ENCODE measurements at regions of chr13 and their contacts with region 1.

Region 1: DNA sequence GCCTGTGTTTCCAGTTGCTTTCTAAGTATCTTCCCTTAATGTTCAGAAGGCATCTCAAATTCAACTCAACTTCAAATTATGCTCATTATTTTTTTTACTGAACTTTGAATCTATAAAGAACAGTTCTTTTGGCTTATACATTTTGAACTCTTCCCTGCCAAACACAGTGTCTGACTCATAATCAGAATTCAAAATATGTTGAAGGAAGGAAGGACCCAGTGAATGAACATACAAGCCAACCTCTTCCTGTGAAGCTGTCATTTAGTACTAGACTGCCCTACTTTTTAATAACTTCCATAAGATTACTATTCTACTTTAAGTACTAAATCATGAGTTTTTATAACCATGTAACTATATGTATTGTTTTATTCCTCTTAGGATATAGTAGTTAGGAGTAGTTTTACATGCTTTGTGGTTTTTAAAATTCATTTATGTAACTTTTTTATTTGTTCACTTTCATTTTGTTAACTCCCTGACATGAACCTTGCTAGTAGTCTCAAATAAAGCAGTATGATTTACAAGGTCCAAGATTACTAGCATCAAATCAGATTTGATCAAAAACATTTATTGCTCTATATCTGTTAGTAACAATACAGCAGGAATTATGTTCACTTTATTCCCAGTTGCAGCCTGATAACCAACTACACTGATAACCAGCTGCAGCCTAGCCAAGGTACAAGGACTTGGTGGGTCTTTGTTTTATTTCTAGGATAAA is 6.4 kb downstream of the NUDT15 start:
- DNase-seq: no peak
- ATAC-seq: no peak
- H3K4me3 ChIP-seq: no peak overlapping the region
- H3K27ac ChIP-seq: no peak overlapping the region
- H3K4me1 ChIP-seq: peaks cover 17% of the 10 kb centered on the region
- H3K27me3 ChIP-seq: no peaks in the 10 kb centered on the region
- CTCF ChIP-seq: no peak
- EP300 ChIP-seq: no peak
- POLR2A ChIP-seq: no peak
- RAD21 ChIP-seq: no peak

Region 2: DNA sequence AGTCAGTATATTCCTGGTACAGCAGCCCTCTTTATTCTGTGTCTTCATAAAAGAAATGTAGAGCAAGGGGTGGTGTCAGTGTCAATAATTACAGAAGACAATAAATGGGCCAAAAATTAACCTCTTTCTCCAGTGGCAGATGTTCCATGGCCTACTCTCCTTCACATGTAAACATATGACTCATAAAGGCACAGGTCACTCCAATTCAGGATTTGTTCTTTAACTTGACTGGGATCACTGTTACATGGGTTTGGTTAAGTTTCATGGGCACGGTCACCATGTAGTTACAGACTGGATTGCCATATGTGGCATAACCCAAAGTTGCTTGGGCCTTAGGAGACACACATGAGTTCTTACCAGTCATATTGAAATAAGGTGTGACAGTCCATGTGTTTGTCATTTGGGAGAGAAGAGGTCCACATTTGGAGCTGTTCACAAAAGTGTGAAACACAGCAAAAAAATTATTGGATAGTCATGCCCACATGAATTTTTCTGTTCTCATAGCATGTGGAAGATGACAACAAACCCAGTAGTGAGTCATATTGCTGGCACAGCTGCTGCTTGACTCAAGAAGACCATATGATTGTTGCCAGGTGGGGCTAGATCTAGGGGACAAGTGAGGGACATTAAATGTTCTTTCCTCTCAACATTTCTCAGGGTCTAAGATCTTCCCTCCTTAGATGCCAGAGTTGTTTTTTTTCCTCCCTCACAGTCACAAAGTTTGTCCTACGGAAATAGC is 1079.0 kb before region 1 on chr13:
- CTCF ChIA-PET with region 1: no interaction called
- POLR2A ChIA-PET with region 1: no interaction called
- in situ Hi-C with region 1: no loop called
- intact Hi-C with region 1: loop called (anchors 5 kb)
- DNase-seq: no peak
- ATAC-seq: no peak
- H3K4me3 ChIP-seq: no peak overlapping the region
- H3K27ac ChIP-seq: no peak overlapping the region
- H3K4me1 ChIP-seq: no peaks in the 10 kb centered on the region
- H3K27me3 ChIP-seq: no peaks in the 10 kb centered on the region
- CTCF ChIP-seq: no peak
- EP300 ChIP-seq: no peak
- POLR2A ChIP-seq: no peak
- RAD21 ChIP-seq: no peak

Measured in HepG2 (cell line).